RWPE1 (cell line): ENCODE measurements at regions of chr19 and their contacts with region 1.

Region 1: GRCh38 chr19:33071887-33072286 is 7.2 kb upstream of the RHPN2 start:
- DNase-seq: no peak
- H3K27ac ChIP-seq: no peak overlapping the region
- CTCF ChIP-seq: no peak

Region 2: GRCh38 chr19:32852216-32852615 is 219.7 kb before region 1 on chr19:
- CTCF ChIA-PET with region 1: no interaction called
- POLR2A ChIA-PET with region 1: no interaction called
- DNase-seq: no peak
- H3K27ac ChIP-seq: no peak overlapping the region
- CTCF ChIP-seq: no peak

Region 3: GRCh38 chr19:32881766-32882165 is 190.1 kb before region 1 on chr19:
- CTCF ChIA-PET with region 1: no interaction called
- POLR2A ChIA-PET with region 1: no interaction called
- DNase-seq: no peak
- H3K27ac ChIP-seq: no peak overlapping the region
- CTCF ChIP-seq: no peak

Region 4: DNA sequence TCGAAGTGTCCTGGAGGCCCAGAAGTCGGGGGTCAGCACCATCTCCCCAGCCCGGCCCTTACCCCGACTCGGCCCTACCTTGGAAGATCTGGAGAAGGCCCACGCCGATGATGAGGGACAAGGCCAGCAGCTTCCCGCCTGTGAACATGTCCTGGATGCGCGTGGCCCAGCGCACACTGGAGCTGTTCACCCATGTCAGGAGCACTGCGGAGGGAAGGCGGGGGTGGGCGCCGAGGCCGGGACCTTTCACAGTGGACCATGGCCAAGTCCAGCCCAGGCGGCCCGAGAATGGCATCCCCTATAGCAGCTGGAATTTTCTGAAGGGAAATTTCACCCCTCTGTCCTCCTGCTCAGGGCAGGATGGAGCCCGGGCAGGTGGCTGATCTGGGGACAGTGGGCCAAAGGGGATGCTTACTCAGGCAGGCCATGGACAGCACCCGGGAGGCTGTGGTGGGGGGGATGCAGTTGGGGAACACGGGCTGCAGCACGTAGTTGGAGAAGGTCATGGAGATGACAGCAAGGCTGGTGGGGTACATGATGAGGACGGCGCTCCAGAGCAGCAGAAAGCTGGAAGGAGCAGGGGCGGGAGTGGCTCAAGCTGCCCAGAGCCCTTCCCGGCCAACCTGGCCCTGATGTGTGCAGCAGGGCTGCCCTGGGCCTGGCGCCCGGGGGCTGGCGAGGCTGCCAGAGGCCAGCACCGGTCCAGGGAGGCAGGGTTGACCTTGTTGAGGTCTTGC is 140.7 kb after region 1 on chr19:
- CTCF ChIA-PET with region 1: interaction called, 10 read pairs
- POLR2A ChIA-PET with region 1: no interaction called
- DNase-seq: no peak
- H3K27ac ChIP-seq: no peak overlapping the region
- CTCF ChIP-seq: no peak